T-cell (primary cell): ENCODE measurements at regions of chr12 and their contacts with region 1.

Region 1: DNA sequence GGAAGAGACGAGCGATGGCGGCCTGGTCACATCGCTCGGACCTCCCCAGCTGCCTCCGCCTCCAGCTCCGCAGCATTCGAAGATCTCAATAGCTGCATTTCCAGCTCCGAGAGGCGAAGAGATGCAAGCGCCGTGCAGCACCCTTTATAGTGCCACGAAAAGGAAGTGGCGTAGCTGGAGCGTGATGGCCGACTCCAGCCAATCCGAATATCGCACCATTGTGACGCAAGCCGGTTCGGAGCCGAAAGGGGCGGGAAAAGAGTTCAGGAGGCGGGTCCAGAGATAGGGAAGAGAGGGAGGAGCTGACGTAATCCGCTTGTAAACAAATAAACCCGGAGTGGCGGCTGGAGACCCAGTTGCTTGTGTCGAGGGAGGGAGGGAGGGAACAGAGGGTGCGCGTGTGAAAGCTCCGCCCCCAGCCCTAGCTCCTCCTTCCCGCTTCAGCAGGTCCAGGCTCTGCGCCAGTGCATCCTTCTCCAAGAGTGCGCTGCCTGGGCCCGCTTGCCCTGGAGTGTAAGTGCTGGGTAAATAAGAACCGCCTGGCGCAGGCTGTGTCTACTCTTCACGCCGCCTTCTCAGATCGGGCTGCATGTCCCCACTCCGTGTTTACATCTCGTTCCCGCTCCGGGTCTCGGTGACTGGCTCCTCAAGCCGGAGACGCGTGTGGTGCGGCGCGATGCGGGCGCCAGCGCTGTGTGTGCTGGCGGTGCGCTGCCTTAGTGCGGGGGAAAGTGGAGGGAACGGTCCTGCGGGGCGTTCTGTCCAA is at the start of gene BTG1:
- DNase-seq: peak; percentile 95 to 100 (median 99)
- ATAC-seq: peak; percentile 76 to 83 (median 80)
- H3K4me3 ChIP-seq: peak within 1 kb of the TSS; percentile 77 to 98
- H3K4me3 Mint-ChIP-seq: peak within 1 kb of the TSS; percentile 100
- H3K27ac ChIP-seq: peak within 1 kb of the TSS; percentile 94
- H3K27ac Mint-ChIP-seq: peak within 1 kb of the TSS; percentile 99 to 100
- H3K4me1 ChIP-seq: peaks cover 10% of the 10 kb centered on the region in 2 experiments
- H3K4me1 Mint-ChIP-seq: peaks cover 27 to 51% (median 32%) of the 10 kb centered on the region in 3 donors
- H3K27me3 ChIP-seq: no peaks in the 10 kb centered on the region
- H3K27me3 Mint-ChIP-seq: no peaks in the 10 kb centered on the region
- total RNA-seq, gene BTG1: 484 to 1,238 (median 551) TPM

Region 2: DNA sequence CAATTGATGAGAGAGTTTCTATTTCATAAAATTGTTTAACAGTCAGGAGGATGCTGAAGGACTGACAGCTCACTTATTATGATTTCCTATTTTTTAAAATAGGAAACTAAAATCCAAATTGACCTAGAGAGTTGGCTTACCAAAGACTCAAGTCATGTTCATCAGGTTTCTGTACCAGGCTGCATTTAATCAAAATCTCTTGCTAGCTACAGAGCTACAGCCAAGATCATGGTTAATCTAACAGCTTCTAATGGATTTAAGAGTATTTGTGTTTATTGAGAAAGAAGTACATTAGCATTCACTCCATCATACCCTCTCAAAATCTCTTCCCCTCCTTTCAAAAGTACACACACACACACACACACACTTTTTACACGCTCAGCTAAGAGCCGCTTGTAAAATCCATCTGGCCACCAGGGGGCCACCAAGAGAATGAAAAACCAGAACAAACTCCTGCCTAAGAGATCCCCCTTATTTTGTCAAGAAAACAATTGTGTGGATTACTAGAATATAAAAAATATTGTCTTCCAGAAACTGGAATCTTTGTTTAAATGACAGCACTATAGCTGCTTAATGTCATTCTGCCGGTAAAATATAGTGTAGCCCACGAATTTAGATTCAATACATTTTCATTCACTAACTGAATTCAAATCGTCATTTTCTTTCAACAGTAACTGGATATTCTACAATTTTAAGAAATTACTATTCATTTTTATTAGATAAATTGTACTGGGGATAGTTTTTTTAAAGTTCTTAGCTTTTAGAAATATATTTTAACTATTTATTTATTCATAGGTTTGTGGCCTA is 334.2 kb before region 1 on chr12:
- CTCF ChIA-PET with region 1: interaction called in 1 of 2 experiments, 12 read pairs
- POLR2A ChIA-PET with region 1: interaction called, 8 to 16 read pairs
- DNase-seq: peak; percentile 57 to 86 (median 77)
- ATAC-seq: peak; percentile 71 to 88 (median 76)
- H3K4me3 ChIP-seq: no peak overlapping the region
- H3K4me3 Mint-ChIP-seq: peak overlapping the region in 2 of 3 donors; percentile 14 to 23
- H3K27ac ChIP-seq: peak overlapping the region; percentile 13
- H3K27ac Mint-ChIP-seq: peak overlapping the region; percentile 66 to 88
- H3K4me1 ChIP-seq: peaks cover 2 to 5% of the 10 kb centered on the region in 2 experiments
- H3K4me1 Mint-ChIP-seq: peaks cover 25 to 39% (median 30%) of the 10 kb centered on the region in 3 donors
- H3K27me3 ChIP-seq: no peaks in the 10 kb centered on the region
- H3K27me3 Mint-ChIP-seq: no peaks in the 10 kb centered on the region

Region 3: GRCh38 chr12:92049403-92049802 is 96.5 kb before region 1 on chr12:
- CTCF ChIA-PET with region 1: no interaction called
- POLR2A ChIA-PET with region 1: interaction called, 3 to 15 read pairs
- DNase-seq: no peak
- ATAC-seq: no peak
- H3K4me3 ChIP-seq: no peak overlapping the region
- H3K4me3 Mint-ChIP-seq: no peak overlapping the region
- H3K27ac ChIP-seq: no peak overlapping the region
- H3K27ac Mint-ChIP-seq: peak overlapping the region in 1 of 2 donors; percentile 0
- H3K4me1 ChIP-seq: peaks cover 4 to 7% of the 10 kb centered on the region in 2 experiments
- H3K4me1 Mint-ChIP-seq: peaks cover 70 to 87% (median 76%) of the 10 kb centered on the region in 3 donors
- H3K27me3 ChIP-seq: no peaks in the 10 kb centered on the region
- H3K27me3 Mint-ChIP-seq: no peaks in the 10 kb centered on the region

Region 4: GRCh38 chr12:92185052-92185451 is 39.1 kb after region 1 on chr12:
- CTCF ChIA-PET with region 1: interaction called in 1 of 2 experiments, 3 read pairs
- POLR2A ChIA-PET with region 1: interaction called in 1 of 2 experiments, 13 read pairs
- DNase-seq: peak in 18 of 35 experiments; percentile 4 to 66 (median 16)
- ATAC-seq: peak; percentile 84 to 96 (median 92)
- H3K4me3 ChIP-seq: no peak overlapping the region
- H3K4me3 Mint-ChIP-seq: peak overlapping the region; percentile 43 to 60 (median 47)
- H3K27ac ChIP-seq: peak overlapping the region; percentile 50
- H3K27ac Mint-ChIP-seq: peak overlapping the region; percentile 81 to 91
- H3K4me1 ChIP-seq: peaks cover 16 to 32% of the 10 kb centered on the region in 2 experiments
- H3K4me1 Mint-ChIP-seq: peaks cover 50 to 56% (median 52%) of the 10 kb centered on the region in 3 donors
- H3K27me3 ChIP-seq: no peaks in the 10 kb centered on the region
- H3K27me3 Mint-ChIP-seq: no peaks in the 10 kb centered on the region

Region 5: GRCh38 chr12:92297932-92298696 is 152.2 kb after region 1 on chr12:
- CTCF ChIA-PET with region 1: no interaction called
- POLR2A ChIA-PET with region 1: interaction called in 1 of 2 experiments, 10 read pairs
- DNase-seq: peak in 9 of 35 experiments; percentile 0 to 39 (median 9)
- ATAC-seq: peak; percentile 93 to 95 (median 94)
- H3K4me3 ChIP-seq: no peak overlapping the region
- H3K4me3 Mint-ChIP-seq: peak overlapping the region in 2 of 3 donors; percentile 11 to 47
- H3K27ac ChIP-seq: peak overlapping the region; percentile 70
- H3K27ac Mint-ChIP-seq: no peak overlapping the region
- H3K4me1 ChIP-seq: peaks cover 17 to 25% of the 10 kb centered on the region in 2 experiments
- H3K4me1 Mint-ChIP-seq: peaks cover 0 to 20% (median 16%) of the 10 kb centered on the region in 3 donors
- H3K27me3 ChIP-seq: no peaks in the 10 kb centered on the region
- H3K27me3 Mint-ChIP-seq: no peaks in the 10 kb centered on the region

Region 6: DNA sequence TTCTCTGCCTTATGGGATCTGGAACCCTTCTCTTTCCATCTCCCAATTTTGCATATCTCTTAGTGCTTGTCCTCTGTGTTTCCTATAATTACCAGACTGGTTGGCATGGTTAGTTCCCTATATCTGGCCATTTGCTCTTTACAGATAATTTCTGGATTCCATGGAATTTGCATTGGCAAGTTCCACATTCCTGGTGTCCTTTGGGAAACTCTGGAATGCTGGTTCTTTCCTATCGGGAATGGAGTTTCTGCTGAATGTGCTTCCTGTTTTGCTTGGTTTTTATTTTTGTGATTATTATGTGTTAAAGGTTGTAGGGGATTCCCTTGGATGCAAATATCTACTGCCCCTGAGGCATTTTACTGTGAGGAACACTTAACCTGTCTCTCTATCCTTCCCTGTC is 192.8 kb after region 1 on chr12:
- CTCF ChIA-PET with region 1: no interaction called
- POLR2A ChIA-PET with region 1: no interaction called
- DNase-seq: no peak
- ATAC-seq: no peak
- H3K4me3 ChIP-seq: no peak overlapping the region
- H3K4me3 Mint-ChIP-seq: no peak overlapping the region
- H3K27ac ChIP-seq: no peak overlapping the region
- H3K27ac Mint-ChIP-seq: no peak overlapping the region
- H3K4me1 ChIP-seq: peaks cover 0 to 12% of the 10 kb centered on the region in 2 experiments
- H3K4me1 Mint-ChIP-seq: peaks cover 24 to 33% (median 27%) of the 10 kb centered on the region in 3 donors
- H3K27me3 ChIP-seq: no peaks in the 10 kb centered on the region
- H3K27me3 Mint-ChIP-seq: no peaks in the 10 kb centered on the region

Region 7: GRCh38 chr12:92408072-92408900 is 262.4 kb after region 1 on chr12:
- CTCF ChIA-PET with region 1: interaction called in 1 of 2 experiments, 5 read pairs
- POLR2A ChIA-PET with region 1: interaction called, 30 to 66 read pairs
- DNase-seq: peak in 15 of 35 experiments; percentile 24 to 71 (median 34)
- ATAC-seq: no peak
- H3K4me3 ChIP-seq: no peak overlapping the region
- H3K4me3 Mint-ChIP-seq: peak overlapping the region in 1 of 3 donors; percentile 16
- H3K27ac ChIP-seq: no peak overlapping the region
- H3K27ac Mint-ChIP-seq: peak overlapping the region; percentile 24 to 72
- H3K4me1 ChIP-seq: peaks cover 17 to 27% of the 10 kb centered on the region in 2 experiments
- H3K4me1 Mint-ChIP-seq: peaks cover 64 to 69% (median 65%) of the 10 kb centered on the region in 3 donors
- H3K27me3 ChIP-seq: no peaks in the 10 kb centered on the region
- H3K27me3 Mint-ChIP-seq: no peaks in the 10 kb centered on the region

Region 8: DNA sequence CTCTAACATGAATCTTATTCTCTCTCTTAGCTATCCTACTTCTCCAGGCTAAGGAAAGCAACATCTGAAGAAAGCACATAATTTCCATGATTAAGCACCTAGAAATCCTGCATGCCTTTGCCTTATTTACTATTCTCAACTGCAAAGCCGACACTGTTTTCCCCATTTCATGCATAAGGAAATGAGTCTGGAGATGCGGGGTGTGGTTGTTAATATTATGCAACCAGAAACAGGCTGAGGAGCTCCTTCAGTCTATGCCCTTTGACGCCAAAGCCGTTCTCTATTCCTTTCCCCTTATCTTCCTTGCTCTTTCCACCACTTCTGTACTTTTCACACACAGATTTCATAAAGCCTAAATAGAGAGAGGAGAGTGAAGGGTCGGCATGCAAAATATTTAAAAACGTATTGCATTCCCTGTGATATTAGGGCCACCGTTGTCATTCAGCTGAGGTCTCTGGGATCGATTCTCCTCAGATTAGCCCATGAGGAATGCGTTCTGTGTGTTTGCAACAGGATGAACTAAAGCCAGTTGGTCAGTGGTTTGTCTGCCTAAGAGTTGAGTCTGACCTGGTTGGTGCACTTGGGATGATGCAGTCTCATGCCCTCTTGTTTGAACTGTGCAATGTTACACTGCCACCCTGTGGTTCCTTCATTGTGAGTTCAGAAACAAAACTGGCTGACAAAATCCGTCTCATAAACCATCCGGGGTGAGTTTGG is 503.8 kb after region 1 on chr12:
- CTCF ChIA-PET with region 1: interaction called in 1 of 2 experiments, 3 read pairs
- POLR2A ChIA-PET with region 1: interaction called in 1 of 2 experiments, 12 read pairs
- DNase-seq: peak in 34 of 35 experiments; percentile 11 to 85 (median 48)
- ATAC-seq: peak; percentile 78 to 87 (median 84)
- H3K4me3 ChIP-seq: no peak overlapping the region
- H3K4me3 Mint-ChIP-seq: no peak overlapping the region
- H3K27ac ChIP-seq: no peak overlapping the region
- H3K27ac Mint-ChIP-seq: no peak overlapping the region
- H3K4me1 ChIP-seq: no peaks in the 10 kb centered on the region
- H3K4me1 Mint-ChIP-seq: peaks cover 5 to 22% (median 15%) of the 10 kb centered on the region in 3 donors
- H3K27me3 ChIP-seq: no peaks in the 10 kb centered on the region
- H3K27me3 Mint-ChIP-seq: peaks cover 0 to 2% of the 10 kb centered on the region in 2 donors